A673 (cell line): ENCODE measurements at regions of chr19 and their contacts with region 1.

Region 1: DNA sequence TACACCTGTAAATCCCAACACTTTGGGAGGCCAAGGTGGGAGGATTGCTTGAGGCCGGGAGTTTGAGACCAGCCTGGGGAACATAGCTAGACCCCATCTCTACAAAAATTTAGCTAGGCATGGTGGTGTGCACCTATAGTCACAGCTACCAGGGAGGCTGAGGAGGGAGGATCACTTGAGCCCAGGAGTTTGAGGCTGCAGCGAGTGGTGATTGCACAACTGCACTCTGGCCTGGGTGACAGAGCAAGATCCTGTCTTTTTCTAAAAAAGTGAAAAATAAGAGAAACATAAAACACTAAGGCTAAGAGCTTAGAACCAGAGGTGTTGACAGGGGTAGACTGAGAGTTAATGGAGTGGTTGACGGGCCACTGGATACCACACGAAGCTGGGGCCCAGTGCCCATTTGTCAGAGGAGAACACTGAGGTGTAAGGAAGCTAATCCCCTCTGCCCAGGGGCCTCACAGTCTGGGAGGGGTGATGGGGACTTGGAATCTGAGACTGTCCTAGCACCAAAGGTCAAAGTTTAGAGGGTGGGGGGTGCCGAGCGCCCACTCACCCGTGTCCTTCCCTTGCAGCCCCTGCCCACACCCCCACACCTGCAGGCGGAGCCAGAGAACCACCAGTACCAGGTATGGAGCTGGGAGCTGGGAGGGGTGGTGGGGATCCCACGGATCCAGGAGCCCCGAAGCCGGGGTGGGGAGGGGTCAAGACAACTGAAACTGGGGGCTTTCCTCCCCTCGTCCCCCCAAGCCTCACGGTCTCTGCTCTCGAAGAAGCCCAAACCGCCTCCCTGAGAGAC is 10.9 kb downstream of the CEACAM19 start:
- DNase-seq: no peak
- H3K4me3 ChIP-seq: no peak overlapping the region
- H3K27ac ChIP-seq: no peak overlapping the region
- H3K4me1 ChIP-seq: peaks cover 1% of the 10 kb centered on the region
- H3K27me3 ChIP-seq: no peaks in the 10 kb centered on the region
- CTCF ChIP-seq: no peak

Region 2: GRCh38 chr19:44694184-44694579 is 12.0 kb after region 1 on chr19:
- CTCF ChIA-PET with region 1: no interaction called
- POLR2A ChIA-PET with region 1: no interaction called
- intact Hi-C with region 1: no loop called
- DNase-seq: peak; percentile 34
- H3K4me3 ChIP-seq: no peak overlapping the region
- H3K27ac ChIP-seq: no peak overlapping the region
- H3K4me1 ChIP-seq: no peaks in the 10 kb centered on the region
- H3K27me3 ChIP-seq: no peaks in the 10 kb centered on the region
- CTCF ChIP-seq: peak; percentile 56

Region 3: GRCh38 chr19:44808463-44809371 is 126.5 kb after region 1 on chr19 and contains the start of gene BCAM:
- CTCF ChIA-PET with region 1: no interaction called
- POLR2A ChIA-PET with region 1: interaction called, 11 read pairs
- intact Hi-C with region 1: no loop called
- DNase-seq: peak; percentile 45
- H3K4me3 ChIP-seq: peak within 1 kb of the TSS; percentile 51
- H3K27ac ChIP-seq: peak within 1 kb of the TSS; percentile 41
- H3K4me1 ChIP-seq: no peaks in the 10 kb centered on the region
- H3K27me3 ChIP-seq: no peaks in the 10 kb centered on the region
- CTCF ChIP-seq: no peak
- total RNA-seq, gene BCAM: 3.4 and 6.6 TPM in 2 replicates